A673 (cell line): ENCODE measurements at regions of chr1 and their contacts with region 1.

Region 1: DNA sequence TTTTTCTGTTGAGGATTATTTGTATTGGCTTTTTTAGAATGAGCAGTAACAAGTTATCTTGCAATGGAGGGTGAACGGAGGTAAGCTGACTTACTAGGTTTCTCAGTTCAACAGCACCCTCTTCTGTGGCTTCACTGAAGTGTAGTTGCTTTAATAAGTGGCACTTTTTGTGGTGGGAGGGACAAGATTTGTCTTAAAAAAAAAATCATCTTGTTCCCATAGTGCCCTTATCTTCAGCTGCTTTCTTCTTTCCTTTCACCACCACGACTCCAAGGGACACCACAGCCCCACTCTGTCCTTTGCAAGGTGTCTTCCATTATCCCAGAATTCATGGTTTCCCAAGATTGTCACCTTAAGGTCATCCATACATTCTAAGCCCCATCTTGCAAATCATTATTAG is 92.9 kb downstream of the PIGK start:
- DNase-seq: peak; percentile 68
- H3K4me3 ChIP-seq: no peak overlapping the region
- H3K27ac ChIP-seq: no peak overlapping the region
- H3K4me1 ChIP-seq: no peaks in the 10 kb centered on the region
- H3K27me3 ChIP-seq: no peaks in the 10 kb centered on the region
- CTCF ChIP-seq: peak; percentile 67

Region 2: GRCh38 chr1:75991497-75992114 is 1134.7 kb before region 1 on chr1:
- CTCF ChIA-PET with region 1: no interaction called
- POLR2A ChIA-PET with region 1: no interaction called
- intact Hi-C with region 1: loop called (anchors 5 kb)
- DNase-seq: peak; percentile 87
- H3K4me3 ChIP-seq: no peak overlapping the region
- H3K27ac ChIP-seq: no peak overlapping the region
- H3K4me1 ChIP-seq: no peaks in the 10 kb centered on the region
- H3K27me3 ChIP-seq: peaks cover 34% of the 10 kb centered on the region
- CTCF ChIP-seq: peak; percentile 93

Region 3: GRCh38 chr1:76154206-76154956 is 971.9 kb before region 1 on chr1:
- CTCF ChIA-PET with region 1: interaction called, 5 read pairs
- POLR2A ChIA-PET with region 1: no interaction called
- intact Hi-C with region 1: loop called (anchors 2 kb)
- DNase-seq: peak; percentile 80
- H3K4me3 ChIP-seq: peak overlapping the region; percentile 29
- H3K27ac ChIP-seq: no peak overlapping the region
- H3K4me1 ChIP-seq: no peaks in the 10 kb centered on the region
- H3K27me3 ChIP-seq: no peaks in the 10 kb centered on the region
- CTCF ChIP-seq: peak; percentile 98

Region 4: DNA sequence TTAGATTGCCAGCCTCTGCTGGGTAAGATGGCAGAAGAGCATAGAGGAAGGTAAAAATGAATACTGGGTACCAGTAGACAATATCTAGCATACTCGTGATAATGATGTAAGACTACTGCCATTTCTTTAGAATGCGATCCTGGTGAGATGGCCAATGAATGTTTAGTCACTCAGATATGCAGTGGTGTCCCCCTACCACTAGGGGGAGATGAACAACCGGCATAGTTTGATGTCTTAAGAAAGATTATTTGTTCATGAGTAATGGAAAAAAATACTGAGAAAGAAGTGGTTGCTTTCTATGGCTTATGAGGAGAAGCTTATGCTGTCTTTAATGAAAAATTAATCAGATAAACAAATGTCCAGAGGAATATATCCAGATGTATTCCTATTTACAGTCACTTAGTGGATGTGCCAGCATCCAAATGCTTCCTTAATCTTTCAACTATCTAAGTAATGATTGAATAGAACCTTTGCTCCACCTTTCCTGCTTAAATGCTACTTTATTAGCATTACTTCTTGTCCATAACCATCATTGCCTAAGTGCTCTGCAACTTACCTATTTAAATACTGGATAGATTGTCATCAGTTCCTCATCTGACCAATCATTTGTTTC is 795.2 kb before region 1 on chr1:
- CTCF ChIA-PET with region 1: no interaction called
- POLR2A ChIA-PET with region 1: no interaction called
- intact Hi-C with region 1: loop called (anchors 5 kb)
- DNase-seq: peak; percentile 81
- H3K4me3 ChIP-seq: no peak overlapping the region
- H3K27ac ChIP-seq: no peak overlapping the region
- H3K4me1 ChIP-seq: no peaks in the 10 kb centered on the region
- H3K27me3 ChIP-seq: no peaks in the 10 kb centered on the region
- CTCF ChIP-seq: peak; percentile 96

Region 5: GRCh38 chr1:76901158-76901767 is 225.0 kb before region 1 on chr1:
- CTCF ChIA-PET with region 1: no interaction called
- POLR2A ChIA-PET with region 1: no interaction called
- intact Hi-C with region 1: loop called (anchors 10 kb)
- DNase-seq: peak; percentile 69
- H3K4me3 ChIP-seq: no peak overlapping the region
- H3K27ac ChIP-seq: no peak overlapping the region
- H3K4me1 ChIP-seq: no peaks in the 10 kb centered on the region
- H3K27me3 ChIP-seq: peaks cover 6% of the 10 kb centered on the region
- CTCF ChIP-seq: peak; percentile 87